Heart left ventricle (tissue), 16 donors: ENCODE measurements at regions of chr10 and their contacts with region 1.

Region 1: GRCh38 chr10:4241724-4242345 is 456.8 kb upstream of the KLF6 start:
- DNase-seq: peak in 4 of 5 donors; percentile 72 to 78 (median 76)
- ATAC-seq: peak; percentile 87 to 91 (median 88)
- H3K4me3 ChIP-seq: peak overlapping the region in 11 of 12 donors; percentile 26 to 57 (median 45)
- H3K27ac ChIP-seq: peak overlapping the region; percentile 63 to 96 (median 89)
- H3K4me1 ChIP-seq: peaks cover 0 to 50% (median 41%) of the 10 kb centered on the region in 12 donors
- H3K27me3 ChIP-seq: no peaks in the 10 kb centered on the region
- CTCF ChIP-seq: no peak
- POLR2A ChIP-seq: no peak

Region 2: DNA sequence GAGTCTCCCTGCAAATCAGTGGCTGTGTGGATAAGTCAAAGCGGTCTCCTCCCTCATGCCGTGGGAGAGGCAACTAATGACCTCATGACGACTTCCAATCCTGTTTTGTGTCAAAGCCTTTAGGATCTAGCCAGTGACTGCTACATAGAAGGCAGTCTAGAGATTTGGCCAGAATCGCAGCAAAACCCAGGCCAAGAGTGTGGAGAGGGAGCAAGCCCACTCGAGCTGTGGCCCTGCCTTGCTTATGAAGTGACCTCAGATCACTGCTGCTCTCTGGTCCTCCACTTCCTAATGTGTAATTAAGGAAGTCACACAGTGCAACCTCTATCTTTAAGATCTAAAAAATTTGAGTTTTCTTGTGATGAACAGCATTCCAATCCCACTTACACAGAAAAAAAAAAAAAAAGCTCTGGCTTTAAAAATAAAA is 160.1 kb before region 1 on chr10:
- intact Hi-C with region 1: loop called in 3 of 10 experiments (anchors 5 kb)
- DNase-seq: peak in 3 of 5 donors; percentile 43 to 55 (median 47)
- ATAC-seq: peak in 3 of 4 donors; percentile 28 to 57 (median 57)
- H3K4me3 ChIP-seq: no peak overlapping the region
- H3K27ac ChIP-seq: peak overlapping the region in 10 of 12 donors; percentile 40 to 59 (median 52)
- H3K4me1 ChIP-seq: peaks cover 0 to 55% (median 32%) of the 10 kb centered on the region in 12 donors
- H3K27me3 ChIP-seq: no peaks in the 10 kb centered on the region
- CTCF ChIP-seq: no peak
- POLR2A ChIP-seq: no peak

Region 3: GRCh38 chr10:4333459-4333894 is 91.6 kb after region 1 on chr10:
- intact Hi-C with region 1: loop called in 1 of 10 experiments (anchors 10 kb)
- DNase-seq: no peak
- ATAC-seq: no peak
- H3K4me3 ChIP-seq: no peak overlapping the region
- H3K27ac ChIP-seq: peak overlapping the region in 1 of 12 donors; percentile 68
- H3K4me1 ChIP-seq: peaks cover 0 to 13% (median 0%) of the 10 kb centered on the region in 12 donors
- H3K27me3 ChIP-seq: no peaks in the 10 kb centered on the region
- CTCF ChIP-seq: no peak
- POLR2A ChIP-seq: no peak

Region 4: GRCh38 chr10:4498711-4499251 is 256.9 kb after region 1 on chr10:
- intact Hi-C with region 1: loop called in 1 of 10 experiments (anchors 10 kb)
- DNase-seq: no peak
- ATAC-seq: peak; percentile 86 to 96 (median 88)
- H3K4me3 ChIP-seq: no peak overlapping the region
- H3K27ac ChIP-seq: peak overlapping the region; percentile 47 to 92 (median 81)
- H3K4me1 ChIP-seq: peaks cover 0 to 23% (median 15%) of the 10 kb centered on the region in 12 donors
- H3K27me3 ChIP-seq: no peaks in the 10 kb centered on the region
- CTCF ChIP-seq: no peak
- POLR2A ChIP-seq: no peak

Region 5: DNA sequence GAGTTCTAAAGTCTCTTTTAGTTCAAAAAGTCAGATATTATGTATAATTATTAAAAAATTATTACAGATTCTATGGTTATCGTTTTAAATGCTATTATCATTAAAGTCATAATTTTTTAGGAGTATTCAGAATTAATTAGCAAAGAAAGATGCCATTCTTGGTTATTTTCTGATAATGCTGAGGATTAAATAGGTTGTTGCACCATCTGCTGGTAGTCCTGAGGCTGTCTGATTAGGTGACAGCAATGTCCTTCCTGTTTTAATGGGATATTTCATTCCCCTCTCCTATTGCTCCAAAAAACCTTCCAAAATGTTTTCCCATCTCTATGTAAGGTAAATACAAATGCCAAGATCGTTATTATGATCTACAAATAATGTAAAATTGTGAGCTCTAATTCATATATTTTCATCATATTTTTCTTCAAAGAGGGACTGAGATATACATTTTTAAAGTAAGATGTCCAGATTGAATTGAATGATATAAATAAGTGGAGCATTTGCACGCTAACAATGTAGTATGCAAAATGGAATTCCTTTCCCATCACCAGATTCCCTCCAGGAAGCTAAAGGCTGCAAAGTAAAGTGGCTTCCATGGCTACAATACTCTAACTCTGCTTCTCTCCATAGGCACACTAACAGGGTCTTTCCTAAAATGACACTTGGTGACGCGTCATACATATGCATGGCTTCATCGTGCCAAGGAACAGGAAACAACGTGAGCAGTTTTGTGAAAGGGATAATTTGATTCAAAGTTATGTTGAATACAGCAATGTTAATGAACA is 525.4 kb after region 1 on chr10:
- intact Hi-C with region 1: loop called in 2 of 10 experiments (anchors 5 kb)
- DNase-seq: peak in 2 of 5 donors; percentile 19 to 28
- ATAC-seq: peak in 3 of 4 donors; percentile 44 to 66 (median 57)
- H3K4me3 ChIP-seq: no peak overlapping the region
- H3K27ac ChIP-seq: peak overlapping the region in 10 of 12 donors; percentile 1 to 53 (median 36)
- H3K4me1 ChIP-seq: peaks cover 0 to 52% (median 33%) of the 10 kb centered on the region in 12 donors
- H3K27me3 ChIP-seq: no peaks in the 10 kb centered on the region
- CTCF ChIP-seq: peak; percentile 58 to 90 (median 81)
- POLR2A ChIP-seq: no peak